Activated CD8-positive, alpha-beta T cell treated with anti-CD3 and anti-CD28 coated beads, Interleukin-2, amount 10 ng/mL, durations not matched to agents 7 days and 5 days (primary cell): ENCODE measurements at regions of chr5 and their contacts with region 1.

Region 1: GRCh38 chr5:65760504-65761275 is 38.7 kb downstream of the NLN start:
- DNase-seq: peak; percentile 76
- ATAC-seq: peak; percentile 90
- H3K4me3 Mint-ChIP-seq: no peak overlapping the region
- H3K27ac Mint-ChIP-seq: no peak overlapping the region
- H3K4me1 Mint-ChIP-seq: peaks cover 8% of the 10 kb centered on the region
- H3K27me3 Mint-ChIP-seq: no peaks in the 10 kb centered on the region

Region 2: DNA sequence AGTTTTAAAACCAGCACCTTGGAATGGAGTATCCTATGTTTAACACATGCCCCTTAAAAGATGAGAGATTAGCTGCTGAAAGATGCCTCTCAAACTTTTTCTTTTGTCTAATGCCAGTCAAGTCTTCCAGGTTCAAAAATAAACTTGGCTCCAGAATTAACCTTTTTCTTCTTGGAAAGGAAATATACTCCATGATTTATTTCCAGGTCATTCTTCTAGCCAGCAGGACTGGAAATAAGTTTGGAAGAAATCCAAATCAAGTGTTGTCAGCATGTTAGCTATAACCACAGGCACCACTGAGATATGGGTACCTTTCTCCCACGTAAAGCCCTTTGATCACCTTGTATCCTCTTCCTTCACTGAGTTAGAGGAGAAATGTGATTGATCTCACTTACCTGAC is 17.4 kb after region 1 on chr5:
- CTCF ChIA-PET with region 1: interaction called, 11 read pairs
- POLR2A ChIA-PET with region 1: no interaction called
- DNase-seq: no peak
- ATAC-seq: no peak
- H3K4me3 Mint-ChIP-seq: no peak overlapping the region
- H3K27ac Mint-ChIP-seq: no peak overlapping the region
- H3K4me1 Mint-ChIP-seq: peaks cover 24% of the 10 kb centered on the region
- H3K27me3 Mint-ChIP-seq: no peaks in the 10 kb centered on the region